Adrenal gland (tissue), 19 donors: ENCODE measurements at regions of chr4 and their contacts with region 1.

Region 1: DNA sequence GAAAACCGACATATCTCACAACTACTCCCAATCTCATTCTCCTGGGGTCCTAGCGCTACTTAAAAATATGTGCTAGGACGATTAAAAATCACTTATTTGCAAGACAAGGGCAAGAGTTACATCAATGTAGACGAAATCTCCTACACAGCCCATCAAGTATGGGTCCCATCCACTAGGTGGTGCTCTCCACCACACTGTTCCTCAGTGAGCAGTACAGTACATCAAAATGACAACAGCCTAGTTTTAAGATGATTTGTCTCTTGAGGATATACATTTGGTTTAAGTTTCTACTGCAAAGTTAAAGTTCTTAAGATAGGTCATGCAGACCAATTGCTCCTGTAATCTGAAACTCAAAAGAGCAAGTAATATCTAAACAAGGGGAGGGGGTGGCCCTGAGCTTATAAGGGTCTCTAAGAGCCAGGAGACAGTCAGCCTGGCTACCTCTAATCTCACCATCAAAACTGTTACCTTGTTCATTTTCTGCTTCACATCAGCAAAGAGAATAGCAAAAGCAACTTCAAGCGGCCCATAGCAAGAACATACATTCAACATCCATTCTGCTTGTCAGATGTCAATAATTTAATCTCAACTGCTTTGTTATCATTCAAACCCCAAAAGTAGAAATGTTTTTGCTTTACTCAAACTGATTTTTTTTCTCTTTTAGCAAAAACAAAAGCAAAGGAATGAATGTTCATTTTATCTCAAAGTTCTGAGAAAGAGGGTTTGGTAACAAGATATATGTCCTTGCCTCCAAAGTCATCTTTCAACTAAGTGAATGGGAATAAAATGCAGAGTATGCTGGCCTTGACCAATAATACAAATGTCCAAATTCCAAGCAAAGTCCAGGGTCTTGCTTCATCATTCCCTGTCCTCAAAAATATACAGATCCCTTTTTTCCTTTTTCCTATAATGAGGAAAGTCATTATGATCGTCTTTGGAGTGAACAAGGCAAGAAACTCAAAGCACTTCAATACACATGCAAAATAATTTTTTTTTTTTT is 53.1 kb downstream of the STX18 start:
- DNase-seq: peak; percentile 72 to 91 (median 77)
- H3K4me3 ChIP-seq: no peak overlapping the region
- H3K27ac ChIP-seq: peak overlapping the region in 2 of 5 donors; percentile 2 to 7
- H3K4me1 ChIP-seq: peaks cover 11 to 14% of the 10 kb centered on the region in 2 donors
- H3K27me3 ChIP-seq: no peaks in the 10 kb centered on the region
- CTCF ChIP-seq: peak; percentile 82 to 95 (median 90)
- POLR2A ChIP-seq: no peak

Region 2: DNA sequence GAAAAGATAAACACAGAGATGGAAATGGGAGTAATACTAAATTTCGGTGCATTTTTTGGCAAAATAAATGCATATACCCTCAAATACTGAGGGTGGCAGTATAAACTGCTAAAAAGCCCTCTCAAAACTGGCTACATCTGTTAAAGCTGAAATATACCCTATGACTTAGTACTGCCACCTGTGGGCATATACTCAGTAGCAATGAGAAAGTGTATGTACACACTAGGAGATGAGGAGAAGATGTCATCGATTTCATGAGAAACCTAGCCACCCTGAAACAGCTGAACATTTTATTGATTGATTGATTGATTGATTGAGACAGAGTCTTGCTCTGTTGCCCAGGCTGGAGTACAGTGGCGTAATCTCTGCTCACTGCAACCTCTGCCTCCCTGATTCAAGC is 228.5 kb before region 1 on chr4:
- intact Hi-C with region 1: no loop called
- DNase-seq: no peak
- H3K4me3 ChIP-seq: no peak overlapping the region
- H3K27ac ChIP-seq: no peak overlapping the region
- H3K4me1 ChIP-seq: no peaks in the 10 kb centered on the region
- H3K27me3 ChIP-seq: no peaks in the 10 kb centered on the region
- CTCF ChIP-seq: peak in 4 of 6 experiments; percentile 34 to 43 (median 38)
- POLR2A ChIP-seq: no peak

Region 3: GRCh38 chr4:4443821-4444220 is 44.9 kb before region 1 on chr4:
- intact Hi-C with region 1: no loop called
- DNase-seq: no peak
- H3K4me3 ChIP-seq: no peak overlapping the region
- H3K27ac ChIP-seq: no peak overlapping the region
- H3K4me1 ChIP-seq: no peaks in the 10 kb centered on the region
- H3K27me3 ChIP-seq: no peaks in the 10 kb centered on the region
- CTCF ChIP-seq: no peak
- POLR2A ChIP-seq: no peak

Region 4: DNA sequence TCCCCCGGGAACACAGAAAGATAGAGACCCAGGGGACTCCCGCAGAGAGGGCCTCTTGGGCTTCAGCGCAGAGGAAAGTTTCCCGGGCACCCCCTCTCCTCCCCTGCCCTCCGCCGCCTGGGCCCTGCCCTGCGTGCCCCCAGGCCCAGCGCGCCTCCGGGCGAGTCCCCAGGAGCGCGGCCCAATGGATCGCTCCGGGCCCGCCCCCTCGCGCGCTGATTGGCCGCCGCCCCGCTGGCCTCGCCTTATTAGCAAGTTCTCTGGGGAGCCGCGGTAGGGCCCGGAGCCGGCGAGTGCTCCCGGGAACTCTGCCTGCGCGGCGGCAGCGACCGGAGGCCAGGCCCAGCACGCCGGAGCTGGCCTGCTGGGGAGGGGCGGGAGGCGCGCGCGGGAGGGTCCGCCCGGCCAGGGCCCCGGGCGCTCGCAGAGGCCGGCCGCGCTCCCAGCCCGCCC is 370.7 kb after region 1 on chr4 and contains the start of gene MSX1:
- intact Hi-C with region 1: loop called in 1 of 2 experiments (anchors 10 kb)
- DNase-seq: peak; percentile 88 to 93 (median 90)
- H3K4me3 ChIP-seq: peak within 1 kb of the TSS in 3 of 4 donors; percentile 60 to 95 (median 83)
- H3K27ac ChIP-seq: peak within 1 kb of the TSS in 2 of 5 donors; percentile 47 to 72
- H3K4me1 ChIP-seq: peaks cover 14 to 25% of the 10 kb centered on the region in 2 donors
- H3K27me3 ChIP-seq: peaks cover 55% of the 10 kb centered on the region
- CTCF ChIP-seq: peak in 1 of 6 experiments; percentile 7
- POLR2A ChIP-seq: peak; percentile 91 to 98
- total RNA-seq, gene MSX1: 5.2 to 30.3 (median 7.2) TPM

Region 5: DNA sequence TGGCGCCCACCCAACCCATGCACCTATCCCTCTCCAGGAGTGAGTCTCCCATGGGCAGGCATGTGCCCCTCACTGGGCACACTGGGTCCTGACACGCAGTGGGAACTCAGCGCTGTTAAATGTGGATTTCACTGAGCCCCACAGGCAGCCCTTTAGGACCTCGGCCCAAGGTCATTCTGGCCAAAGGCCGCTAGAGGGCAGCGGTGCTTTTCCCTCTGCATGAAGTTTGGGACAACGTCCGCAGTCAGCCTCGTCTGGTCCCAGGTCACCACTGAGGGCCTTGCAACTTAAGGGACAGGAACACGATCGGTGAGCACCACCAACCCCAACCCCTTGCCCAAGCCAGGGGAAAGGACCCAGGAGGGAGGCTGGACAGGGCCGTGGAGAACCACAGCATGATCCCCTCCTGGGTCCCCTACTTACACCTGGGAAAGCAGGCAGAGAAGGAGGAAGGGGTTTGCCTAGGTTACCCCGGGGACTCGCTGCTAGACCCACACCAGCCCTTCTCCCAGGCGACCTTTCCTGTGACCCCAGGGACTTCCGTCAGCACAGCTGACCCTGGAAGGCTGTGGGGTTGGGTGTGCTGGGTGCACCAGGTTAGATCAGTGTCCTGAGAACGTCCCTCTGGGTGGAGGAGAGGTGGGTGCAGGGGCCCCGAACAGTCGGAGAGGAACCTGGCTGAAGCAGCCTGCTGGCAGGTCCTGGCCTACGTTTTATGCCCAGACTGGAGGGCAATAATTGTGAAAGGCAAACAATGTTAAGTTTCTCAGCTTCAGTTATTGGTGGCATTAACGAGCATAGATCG is 506.6 kb after region 1 on chr4:
- intact Hi-C with region 1: loop called in 1 of 2 experiments (anchors 10 kb)
- DNase-seq: peak; percentile 54 to 82 (median 75)
- H3K4me3 ChIP-seq: no peak overlapping the region
- H3K27ac ChIP-seq: no peak overlapping the region
- H3K4me1 ChIP-seq: peaks cover 0 to 3% of the 10 kb centered on the region in 2 donors
- H3K27me3 ChIP-seq: no peaks in the 10 kb centered on the region
- CTCF ChIP-seq: peak; percentile 66 to 83 (median 74)
- POLR2A ChIP-seq: no peak